Left colon (tissue), 2 donors: ENCODE measurements at regions of chr7 and their contacts with region 1.

Region 1: DNA sequence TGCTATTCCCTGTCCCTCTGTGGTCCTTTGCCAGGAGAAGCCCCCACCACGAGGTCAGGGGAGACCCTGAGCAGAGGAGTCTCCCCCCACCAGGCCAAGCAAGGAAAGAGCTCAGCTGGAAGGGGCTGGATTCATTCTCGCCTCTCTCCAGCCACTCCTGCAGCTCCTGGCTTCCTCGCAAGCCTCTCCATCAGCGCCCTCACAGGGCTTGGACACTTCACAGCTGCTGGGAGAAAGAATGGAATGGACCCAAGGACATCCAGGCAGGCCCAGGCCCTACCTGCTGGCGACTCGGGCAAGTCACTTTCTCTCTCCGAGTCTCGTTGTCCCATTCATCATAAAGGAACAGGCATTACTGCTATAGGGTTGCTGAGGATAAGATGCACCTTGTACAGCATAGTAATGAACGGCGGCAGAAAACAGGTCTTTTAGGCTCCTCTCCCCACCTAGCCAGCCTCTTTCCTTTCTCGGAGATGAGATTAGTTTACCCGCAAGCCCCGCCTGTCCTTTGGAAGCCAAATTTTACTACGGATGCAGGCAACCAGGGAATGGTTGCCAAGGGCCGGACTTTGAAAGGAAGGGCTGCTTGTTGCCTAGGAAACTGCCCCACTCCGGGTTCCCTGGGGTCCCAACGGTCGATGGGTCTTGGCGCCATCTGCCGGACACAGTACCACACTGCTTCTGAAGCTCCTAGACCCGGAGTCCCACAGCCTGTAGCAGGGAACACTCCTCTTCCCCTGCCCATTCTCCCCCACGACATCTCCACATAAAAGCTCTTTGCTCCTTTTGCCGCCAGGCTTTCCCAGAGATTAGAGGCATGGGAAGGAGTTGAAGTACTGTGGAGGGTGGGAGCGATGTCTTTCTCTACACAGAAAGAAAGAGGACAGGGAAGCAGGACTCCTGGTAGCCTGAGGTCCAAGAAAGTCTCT is 22.3 kb downstream of the IMPDH1 start:
- DNase-seq: peak; percentile 55 to 78
- ATAC-seq: peak; percentile 71

Region 2: GRCh38 chr7:128221929-128222403 is 165.5 kb before region 1 on chr7:
- intact Hi-C with region 1: no loop called
- DNase-seq: no peak
- ATAC-seq: peak; percentile 28

Region 3: GRCh38 chr7:128347647-128348097 is 39.8 kb before region 1 on chr7:
- intact Hi-C with region 1: loop called in 1 of 2 experiments (anchors 5 kb)
- DNase-seq: peak in 1 of 2 donors; percentile 54
- ATAC-seq: no peak

Region 4: GRCh38 chr7:128425850-128426249 is 38.4 kb after region 1 on chr7:
- intact Hi-C with region 1: no loop called
- DNase-seq: peak in 1 of 2 donors; percentile 86
- ATAC-seq: peak; percentile 79